ENCODE measurements at regions of chr3 and their contacts with region 1.

Region 1: DNA sequence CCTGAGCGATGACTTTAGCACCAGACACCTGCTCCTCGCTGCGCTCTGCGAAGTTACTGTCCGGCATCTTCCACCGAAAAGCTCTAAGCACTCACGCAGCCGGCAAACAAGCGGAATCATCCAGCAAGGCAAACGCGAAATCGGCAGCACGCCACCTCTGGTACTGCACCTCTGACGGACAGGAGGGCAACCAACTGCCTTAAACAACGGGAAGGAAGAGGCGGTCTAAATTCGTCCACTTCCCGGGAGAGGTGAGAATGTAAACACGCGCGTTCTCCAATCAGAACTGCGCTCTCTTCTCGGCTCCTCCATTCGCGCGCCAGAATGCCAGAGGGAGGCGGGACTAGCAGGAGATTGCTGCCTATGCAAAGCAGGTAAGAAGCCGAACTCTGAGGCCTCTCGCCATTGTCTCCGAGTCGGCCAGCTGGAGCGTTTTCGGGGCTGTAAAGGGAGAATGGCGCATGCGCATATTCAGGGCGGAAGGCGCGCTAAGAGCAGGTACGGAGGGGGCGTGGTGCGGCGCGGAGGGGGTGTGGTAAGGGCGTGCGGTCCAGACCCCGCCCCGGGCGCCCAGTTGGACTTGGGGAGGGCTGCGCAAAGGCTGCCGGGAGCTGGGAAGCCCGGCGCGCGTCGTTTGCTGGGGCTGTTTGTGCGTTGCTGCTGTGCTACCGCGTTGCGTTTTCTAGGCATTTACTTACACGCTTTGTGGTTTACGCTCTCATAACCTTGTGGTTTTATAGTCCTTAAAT is at the starts of genes BTD and HACL1:
- DNase-seq: peak; percentile 98 to 100 (median 99)
- H3K4me3 ChIP-seq: peak within 1 kb of the TSS; percentile 65 to 100
- H3K4me3 Mint-ChIP-seq: peak within 1 kb of the TSS; percentile 97 to 100 (median 100)
- H3K27ac ChIP-seq: peak within 1 kb of the TSS; percentile 83
- H3K27ac Mint-ChIP-seq: peak within 1 kb of the TSS; percentile 94 to 100 (median 99)
- H3K4me1 ChIP-seq: peaks cover 37% of the 10 kb centered on the region
- H3K4me1 Mint-ChIP-seq: peaks cover 32 to 70% (median 50%) of the 10 kb centered on the region in 4 donors
- H3K27me3 ChIP-seq: no peaks in the 10 kb centered on the region
- H3K27me3 Mint-ChIP-seq: no peaks in the 10 kb centered on the region
- total RNA-seq, gene BTD: 23.5 to 27.4 TPM
- total RNA-seq, gene HACL1: 37.6 to 44.4 TPM

Region 2: GRCh38 chr3:15098503-15099363 is 502.8 kb before region 1 on chr3 and contains the start of gene RBSN:
- CTCF ChIA-PET with region 1: no interaction called
- POLR2A ChIA-PET with region 1: interaction called, 7 read pairs
- intact Hi-C with region 1: loop called (anchors 2 kb)
- DNase-seq: peak; percentile 96 to 98 (median 96)
- H3K4me3 ChIP-seq: peak within 1 kb of the TSS; percentile 61 to 73
- H3K4me3 Mint-ChIP-seq: peak within 1 kb of the TSS; percentile 88 to 99 (median 96)
- H3K27ac ChIP-seq: peak within 1 kb of the TSS; percentile 95
- H3K27ac Mint-ChIP-seq: peak within 1 kb of the TSS; percentile 89 to 99 (median 99)
- H3K4me1 ChIP-seq: peaks cover 22% of the 10 kb centered on the region
- H3K4me1 Mint-ChIP-seq: peaks cover 19 to 35% (median 27%) of the 10 kb centered on the region in 4 donors
- H3K27me3 ChIP-seq: no peaks in the 10 kb centered on the region
- H3K27me3 Mint-ChIP-seq: peaks cover 1 to 2% of the 10 kb centered on the region in 2 donors
- total RNA-seq, gene RBSN: 33.2 to 34.7 TPM

Region 3: GRCh38 chr3:15623535-15624440 is 22.2 kb after region 1 on chr3:
- CTCF ChIA-PET with region 1: interaction called, 8 read pairs
- POLR2A ChIA-PET with region 1: interaction called, 10 read pairs
- intact Hi-C with region 1: loop called (anchors 1 kb)
- DNase-seq: peak in 4 of 5 donors; percentile 45 to 65 (median 54)
- H3K4me3 ChIP-seq: peak overlapping the region; percentile 12 to 34
- H3K4me3 Mint-ChIP-seq: peak overlapping the region; percentile 83 to 90 (median 86)
- H3K27ac ChIP-seq: peak overlapping the region; percentile 55
- H3K27ac Mint-ChIP-seq: peak overlapping the region; percentile 86 to 96 (median 95)
- H3K4me1 ChIP-seq: peaks cover 37% of the 10 kb centered on the region
- H3K4me1 Mint-ChIP-seq: peaks cover 31 to 51% (median 39%) of the 10 kb centered on the region in 4 donors
- H3K27me3 ChIP-seq: no peaks in the 10 kb centered on the region
- H3K27me3 Mint-ChIP-seq: no peaks in the 10 kb centered on the region

Region 4: GRCh38 chr3:15859507-15860013 is 258.0 kb after region 1 on chr3:
- CTCF ChIA-PET with region 1: no interaction called
- POLR2A ChIA-PET with region 1: interaction called, 5 read pairs
- intact Hi-C with region 1: loop called (anchors 5 kb)
- DNase-seq: peak; percentile 70 to 80 (median 77)
- H3K4me3 ChIP-seq: peak overlapping the region in 1 of 2 donors; percentile 71
- H3K4me3 Mint-ChIP-seq: peak overlapping the region; percentile 70 to 100 (median 94)
- H3K27ac ChIP-seq: peak overlapping the region; percentile 63
- H3K27ac Mint-ChIP-seq: peak overlapping the region; percentile 88 to 96 (median 94)
- H3K4me1 ChIP-seq: peaks cover 20% of the 10 kb centered on the region
- H3K4me1 Mint-ChIP-seq: peaks cover 16 to 52% (median 29%) of the 10 kb centered on the region in 4 donors
- H3K27me3 ChIP-seq: no peaks in the 10 kb centered on the region
- H3K27me3 Mint-ChIP-seq: no peaks in the 10 kb centered on the region

Region 5: DNA sequence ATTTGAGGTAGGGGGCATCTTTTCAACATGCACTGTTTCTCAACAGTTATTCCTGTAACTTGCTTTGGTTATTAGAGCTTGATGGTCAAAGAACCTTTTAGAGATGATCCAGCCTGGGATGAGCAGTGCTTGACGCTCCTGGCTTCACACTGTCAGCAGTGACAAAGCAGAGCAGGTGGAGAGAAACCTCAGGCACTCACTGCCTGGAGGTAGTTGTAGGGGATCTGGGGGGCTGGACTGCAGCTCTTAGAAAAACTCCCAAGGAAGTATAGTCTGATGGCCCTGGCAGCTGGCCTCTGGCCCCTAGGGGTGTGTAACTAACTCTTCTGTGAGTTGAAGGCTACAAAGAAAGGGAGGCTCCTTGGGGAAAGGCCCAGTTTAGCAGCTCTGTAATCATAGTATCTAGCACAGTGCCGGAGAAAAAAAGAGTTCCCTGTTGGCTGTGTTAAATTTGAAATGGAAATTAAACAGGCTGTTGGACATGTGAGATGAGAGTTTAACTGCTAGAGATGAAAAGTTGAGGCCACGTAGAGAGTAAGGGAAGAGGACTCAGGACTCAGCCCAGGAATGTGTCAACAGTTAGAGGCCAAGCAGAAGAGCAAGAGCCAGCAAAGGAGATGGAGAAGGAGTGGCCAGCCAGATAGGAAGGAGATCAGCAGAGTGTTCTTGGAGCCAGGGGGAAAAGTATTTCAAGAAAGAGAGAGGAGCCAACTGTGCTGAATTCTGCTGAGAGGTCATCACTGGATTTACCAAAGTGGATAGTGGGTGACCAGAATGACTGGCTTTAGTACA is 677.6 kb after region 1 on chr3:
- CTCF ChIA-PET with region 1: no interaction called
- POLR2A ChIA-PET with region 1: no interaction called
- intact Hi-C with region 1: no loop called
- DNase-seq: no peak
- H3K4me3 ChIP-seq: no peak overlapping the region
- H3K4me3 Mint-ChIP-seq: no peak overlapping the region
- H3K27ac ChIP-seq: no peak overlapping the region
- H3K27ac Mint-ChIP-seq: no peak overlapping the region
- H3K4me1 ChIP-seq: no peaks in the 10 kb centered on the region
- H3K4me1 Mint-ChIP-seq: peaks cover 7 to 17% (median 11%) of the 10 kb centered on the region in 4 donors
- H3K27me3 ChIP-seq: no peaks in the 10 kb centered on the region
- H3K27me3 Mint-ChIP-seq: no peaks in the 10 kb centered on the region

Measured in CD4-positive, alpha-beta memory T cell (primary cell).